Aorta (tissue), 5 donors: ENCODE measurements at regions of chr4 and their contacts with region 1.

Region 1: GRCh38 chr4:6716018-6716911 is at the start of gene BLOC1S4:
- DNase-seq: peak; percentile 92 to 95
- ATAC-seq: peak; percentile 95
- H3K4me3 ChIP-seq: peak within 1 kb of the TSS; percentile 22 to 50
- H3K27ac ChIP-seq: peak within 1 kb of the TSS; percentile 1 to 56
- H3K4me1 ChIP-seq: no peaks in the 10 kb centered on the region
- H3K27me3 ChIP-seq: no peaks in the 10 kb centered on the region
- total RNA-seq, gene BLOC1S4: 10.8 to 12.5 TPM

Region 2: DNA sequence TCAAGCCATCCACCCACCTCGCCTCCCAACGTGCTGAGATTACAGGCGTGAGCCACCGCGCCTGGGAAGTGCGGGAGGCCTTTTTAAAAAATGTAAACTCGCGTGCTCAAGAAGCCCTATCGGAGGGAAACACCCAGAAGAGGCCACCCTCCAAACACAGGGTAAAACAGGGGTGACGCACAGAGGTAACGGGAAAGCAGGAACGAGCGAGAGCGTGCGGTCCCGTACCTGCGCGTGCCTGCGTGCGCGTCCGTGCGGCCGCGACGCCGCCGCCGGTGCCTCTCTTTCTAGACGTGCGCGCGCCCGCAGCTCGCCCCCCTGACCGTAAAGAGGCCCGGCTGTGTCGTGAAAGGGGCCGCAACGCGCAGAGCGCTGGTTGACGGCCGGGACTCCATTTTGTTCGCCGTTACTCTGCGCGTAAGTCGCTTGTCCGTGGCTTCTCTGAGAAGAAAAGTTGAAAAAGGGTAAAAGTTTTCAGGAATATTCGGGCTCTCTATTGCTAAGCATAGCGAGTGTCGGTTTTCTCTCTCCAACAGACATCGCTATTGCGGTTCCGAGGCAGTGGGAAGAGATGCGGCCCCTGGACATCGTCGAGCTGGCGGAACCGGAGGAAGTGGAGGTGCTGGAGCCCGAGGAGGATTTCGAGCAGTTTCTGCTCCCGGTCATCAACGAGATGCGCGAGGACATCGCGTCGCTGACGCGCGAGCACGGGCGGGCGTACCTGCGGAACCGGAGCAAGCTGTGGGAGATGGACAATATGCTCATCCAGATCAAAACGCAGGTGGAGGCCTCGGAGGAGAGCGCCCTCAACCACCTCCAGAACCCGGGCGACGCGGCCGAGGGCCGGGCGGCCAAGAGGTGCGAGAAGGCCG is 75.7 kb before region 1 on chr4 and contains the start of gene MRFAP1:
- intact Hi-C with region 1: loop called (anchors 2 to 5 kb)
- DNase-seq: peak; percentile 97 to 98
- ATAC-seq: peak; percentile 98
- H3K4me3 ChIP-seq: peak within 1 kb of the TSS; percentile 5 to 81
- H3K27ac ChIP-seq: peak within 1 kb of the TSS; percentile 38 to 89
- H3K4me1 ChIP-seq: peaks cover 0 to 6% of the 10 kb centered on the region in 2 donors
- H3K27me3 ChIP-seq: no peaks in the 10 kb centered on the region
- total RNA-seq, gene MRFAP1: 244 to 263 TPM

Region 3: DNA sequence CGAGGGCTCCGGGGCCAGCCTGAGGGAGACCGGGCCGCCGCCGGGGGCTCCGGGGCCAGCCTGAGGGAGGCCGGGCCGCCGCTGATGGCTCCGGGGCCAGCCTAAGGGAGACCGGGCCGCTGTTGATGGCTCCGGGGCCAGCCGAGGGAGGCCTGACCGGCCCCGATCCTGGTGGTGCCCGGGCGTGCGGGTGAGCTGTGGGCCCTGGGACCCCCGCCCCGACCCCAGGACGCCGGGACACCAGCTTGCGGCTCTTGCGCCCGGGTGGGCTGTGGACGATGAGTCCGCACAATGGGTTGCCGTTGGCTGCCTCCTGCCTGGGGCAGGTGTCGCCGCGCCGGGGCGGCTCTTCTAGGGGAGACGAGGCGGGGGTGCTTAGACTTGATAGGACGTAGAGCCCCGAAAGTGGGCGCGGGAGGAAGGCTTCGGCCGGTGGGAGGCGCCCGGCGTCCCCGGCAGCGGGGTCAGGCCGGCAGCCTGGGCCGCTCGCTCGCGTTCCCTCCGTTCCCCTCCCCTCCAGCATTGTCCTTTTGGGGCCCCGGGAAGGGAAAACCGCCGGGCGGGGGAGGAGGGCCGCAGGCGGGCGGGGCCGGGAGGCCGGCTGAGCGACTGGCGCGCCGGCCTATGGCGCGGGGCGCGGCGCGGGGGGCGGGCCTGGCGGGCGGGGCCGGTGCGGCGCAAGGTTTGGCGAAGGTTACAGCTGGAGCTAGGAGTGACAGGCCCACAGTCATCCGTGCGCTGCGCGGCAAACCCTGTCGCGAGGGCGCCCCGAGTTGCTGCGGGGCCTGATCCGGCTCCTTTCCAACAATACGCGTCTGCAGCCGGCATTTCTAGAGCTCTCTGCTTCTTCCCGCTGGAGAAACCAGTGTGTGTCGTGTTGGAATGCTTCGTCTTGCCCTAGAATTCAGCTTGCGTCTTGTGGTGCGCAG is 67.1 kb after region 1 on chr4:
- intact Hi-C with region 1: loop called in 1 of 2 experiments (anchors 5 kb)
- DNase-seq: peak; percentile 92 to 96
- ATAC-seq: peak; percentile 94
- H3K4me3 ChIP-seq: peak overlapping the region; percentile 90 to 96
- H3K27ac ChIP-seq: peak overlapping the region; percentile 98 to 99
- H3K4me1 ChIP-seq: no peaks in the 10 kb centered on the region
- H3K27me3 ChIP-seq: no peaks in the 10 kb centered on the region

Region 4: GRCh38 chr4:6873792-6874461 is 157.7 kb after region 1 on chr4:
- intact Hi-C with region 1: loop called (anchors 1 to 2 kb)
- DNase-seq: peak; percentile 82 to 90
- ATAC-seq: peak; percentile 77
- H3K4me3 ChIP-seq: no peak overlapping the region
- H3K27ac ChIP-seq: no peak overlapping the region
- H3K4me1 ChIP-seq: no peaks in the 10 kb centered on the region
- H3K27me3 ChIP-seq: no peaks in the 10 kb centered on the region

Region 5: GRCh38 chr4:6986781-6987587 is 270.7 kb after region 1 on chr4:
- intact Hi-C with region 1: loop called in 1 of 2 experiments (anchors 10 kb)
- DNase-seq: peak; percentile 96 to 98
- ATAC-seq: peak; percentile 98
- H3K4me3 ChIP-seq: peak overlapping the region; percentile 78 to 96
- H3K27ac ChIP-seq: peak overlapping the region; percentile 62 to 88
- H3K4me1 ChIP-seq: peaks cover 0 to 3% of the 10 kb centered on the region in 2 donors
- H3K27me3 ChIP-seq: no peaks in the 10 kb centered on the region

Region 6: GRCh38 chr4:7042697-7043464 is 326.6 kb after region 1 on chr4 and contains the start of gene TADA2B:
- intact Hi-C with region 1: loop called in 1 of 2 experiments (anchors 5 kb)
- DNase-seq: peak; percentile 98 to 99
- ATAC-seq: peak; percentile 98
- H3K4me3 ChIP-seq: peak within 1 kb of the TSS; percentile 46 to 93
- H3K27ac ChIP-seq: peak within 1 kb of the TSS; percentile 63 to 93
- H3K4me1 ChIP-seq: no peaks in the 10 kb centered on the region
- H3K27me3 ChIP-seq: no peaks in the 10 kb centered on the region
- total RNA-seq, gene TADA2B: 18.1 to 19.2 TPM

Region 7: DNA sequence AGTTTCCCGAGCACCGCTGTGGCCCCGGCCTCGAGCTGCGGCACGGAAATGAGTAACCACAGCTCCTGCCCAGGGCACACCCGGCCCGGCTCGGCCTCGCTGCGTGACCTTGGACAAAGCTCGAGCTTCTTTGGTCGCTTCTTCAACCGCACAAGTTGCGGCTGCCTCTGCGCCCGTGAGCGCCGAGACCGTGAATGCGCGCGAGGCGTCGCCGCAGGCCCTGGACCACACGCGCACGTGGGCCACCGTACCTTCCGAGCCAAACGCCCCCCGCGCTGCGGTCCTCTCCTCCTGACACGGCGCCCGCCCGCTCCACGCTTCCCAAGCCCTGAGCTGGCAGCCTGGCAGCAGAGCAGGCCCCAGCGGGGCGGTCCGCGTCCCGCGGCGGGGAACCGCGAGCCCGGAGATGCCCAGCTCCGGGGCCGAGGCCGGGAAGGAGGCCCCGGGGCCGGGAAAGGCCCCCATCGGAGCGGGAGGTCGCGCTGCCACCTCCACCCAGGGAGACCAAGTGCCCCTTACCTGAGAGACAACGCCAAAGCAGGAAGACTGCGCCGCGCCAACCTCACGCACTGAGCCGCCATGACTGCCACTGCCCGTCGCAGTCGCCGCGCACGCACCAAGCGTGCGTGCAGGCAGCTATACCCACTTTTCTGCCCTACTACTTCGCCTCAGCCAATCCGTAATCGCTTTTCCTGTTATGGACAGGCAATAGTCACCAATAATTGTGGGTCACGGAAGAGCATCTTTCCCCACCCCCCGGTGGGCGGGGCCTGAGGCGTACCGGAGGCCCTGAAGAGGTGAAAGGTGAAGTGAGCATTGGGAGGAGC is 351.4 kb after region 1 on chr4 and contains the start of gene GRPEL1:
- intact Hi-C with region 1: loop called in 1 of 2 experiments (anchors 10 kb)
- DNase-seq: peak; percentile 100
- ATAC-seq: peak; percentile 99
- H3K4me3 ChIP-seq: peak within 1 kb of the TSS; percentile 74 to 76
- H3K27ac ChIP-seq: peak within 1 kb of the TSS in 1 of 2 donors; percentile 80
- H3K4me1 ChIP-seq: peaks cover 0 to 6% of the 10 kb centered on the region in 2 donors
- H3K27me3 ChIP-seq: no peaks in the 10 kb centered on the region
- total RNA-seq, gene GRPEL1: 16.1 to 22.0 TPM